ENCODE measurements at regions of chr10 and their contacts with region 1.

Region 1: GRCh38 chr10:119686439-119687191 is 35.4 kb downstream of the BAG3 start:
- DNase-seq: peak; percentile 77
- ATAC-seq: peak; percentile 29
- H3K4me3 Mint-ChIP-seq: peak overlapping the region; percentile 82
- H3K27ac Mint-ChIP-seq: peak overlapping the region; percentile 100
- H3K4me1 Mint-ChIP-seq: peaks cover 28% of the 10 kb centered on the region
- H3K27me3 Mint-ChIP-seq: no peaks in the 10 kb centered on the region
- CTCF ChIP-seq: peak; percentile 89

Region 2: GRCh38 chr10:119608316-119609155 is 78.1 kb before region 1 on chr10:
- CTCF ChIA-PET with region 1: interaction called, 11 read pairs
- POLR2A ChIA-PET with region 1: no interaction called
- DNase-seq: peak; percentile 65
- ATAC-seq: peak; percentile 96
- H3K4me3 Mint-ChIP-seq: no peak overlapping the region
- H3K27ac Mint-ChIP-seq: no peak overlapping the region
- H3K4me1 Mint-ChIP-seq: no peaks in the 10 kb centered on the region; the same call in 1 of the 2 replicates
- H3K27me3 Mint-ChIP-seq: peaks cover 4% of the 10 kb centered on the region; the same call in 1 of the 2 replicates
- CTCF ChIP-seq: no peak

Region 3: DNA sequence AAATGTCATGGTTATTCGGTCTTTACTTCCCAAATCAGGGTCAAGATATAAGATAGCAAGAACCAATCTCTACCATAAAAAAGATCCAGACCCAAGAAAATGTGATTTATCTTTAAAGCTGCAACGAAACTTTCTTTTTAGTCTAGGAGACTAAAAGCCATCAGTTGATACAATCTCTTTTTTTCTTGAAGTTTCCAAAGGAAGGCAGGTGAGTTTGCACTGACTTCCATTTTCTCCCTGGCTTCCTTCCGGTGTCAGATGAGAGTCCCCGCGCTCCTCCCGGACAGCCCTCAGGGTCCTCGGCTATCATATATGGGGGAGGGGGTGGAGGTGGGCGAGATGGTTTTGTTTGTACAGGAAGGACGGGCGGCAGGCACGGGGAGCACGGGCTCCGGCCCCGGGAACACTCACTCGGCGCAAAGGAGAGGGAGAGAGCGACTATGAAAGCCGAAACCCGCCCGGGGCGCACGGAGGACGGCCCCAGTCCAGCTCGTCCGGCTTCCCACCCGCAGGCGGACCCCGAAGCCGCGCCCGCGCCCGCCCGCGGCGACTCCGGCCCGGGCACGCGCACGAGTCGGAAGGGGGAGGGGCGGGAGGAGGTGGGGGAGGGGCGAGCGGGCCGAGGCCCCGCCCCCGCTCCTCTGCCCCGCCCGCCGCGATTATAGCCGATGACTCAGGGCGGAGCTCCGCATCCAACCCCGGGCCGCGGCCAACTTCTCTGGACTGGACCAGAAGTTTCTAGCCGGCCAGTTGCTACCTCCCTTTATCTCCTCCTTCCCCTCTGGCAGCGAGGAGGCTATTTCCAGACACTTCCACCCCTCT is 35.7 kb before region 1 on chr10 and contains the start of gene BAG3:
- CTCF ChIA-PET with region 1: interaction called, 8 read pairs
- POLR2A ChIA-PET with region 1: interaction called, 27 read pairs
- DNase-seq: peak; percentile 87
- ATAC-seq: peak; percentile 89
- H3K4me3 Mint-ChIP-seq: peak within 1 kb of the TSS; percentile 88
- H3K27ac Mint-ChIP-seq: peak within 1 kb of the TSS; percentile 31
- H3K4me1 Mint-ChIP-seq: peaks cover 40% of the 10 kb centered on the region
- H3K27me3 Mint-ChIP-seq: no peaks in the 10 kb centered on the region; the same call in 1 of the 2 replicates
- CTCF ChIP-seq: no peak
- total RNA-seq, gene BAG3: 15.7 to 16.8 TPM (median 15.9 TPM) in 3 replicates

Region 4: GRCh38 chr10:119667562-119668328 is 18.9 kb before region 1 on chr10:
- CTCF ChIA-PET with region 1: interaction called, 10 read pairs
- POLR2A ChIA-PET with region 1: interaction called, 3 read pairs
- DNase-seq: no peak
- ATAC-seq: peak; percentile 36
- H3K4me3 Mint-ChIP-seq: no peak overlapping the region
- H3K27ac Mint-ChIP-seq: peak overlapping the region; percentile 48; the same call in 1 of the 2 replicates
- H3K4me1 Mint-ChIP-seq: peaks cover 41% of the 10 kb centered on the region
- H3K27me3 Mint-ChIP-seq: no peaks in the 10 kb centered on the region
- CTCF ChIP-seq: no peak

Region 5: DNA sequence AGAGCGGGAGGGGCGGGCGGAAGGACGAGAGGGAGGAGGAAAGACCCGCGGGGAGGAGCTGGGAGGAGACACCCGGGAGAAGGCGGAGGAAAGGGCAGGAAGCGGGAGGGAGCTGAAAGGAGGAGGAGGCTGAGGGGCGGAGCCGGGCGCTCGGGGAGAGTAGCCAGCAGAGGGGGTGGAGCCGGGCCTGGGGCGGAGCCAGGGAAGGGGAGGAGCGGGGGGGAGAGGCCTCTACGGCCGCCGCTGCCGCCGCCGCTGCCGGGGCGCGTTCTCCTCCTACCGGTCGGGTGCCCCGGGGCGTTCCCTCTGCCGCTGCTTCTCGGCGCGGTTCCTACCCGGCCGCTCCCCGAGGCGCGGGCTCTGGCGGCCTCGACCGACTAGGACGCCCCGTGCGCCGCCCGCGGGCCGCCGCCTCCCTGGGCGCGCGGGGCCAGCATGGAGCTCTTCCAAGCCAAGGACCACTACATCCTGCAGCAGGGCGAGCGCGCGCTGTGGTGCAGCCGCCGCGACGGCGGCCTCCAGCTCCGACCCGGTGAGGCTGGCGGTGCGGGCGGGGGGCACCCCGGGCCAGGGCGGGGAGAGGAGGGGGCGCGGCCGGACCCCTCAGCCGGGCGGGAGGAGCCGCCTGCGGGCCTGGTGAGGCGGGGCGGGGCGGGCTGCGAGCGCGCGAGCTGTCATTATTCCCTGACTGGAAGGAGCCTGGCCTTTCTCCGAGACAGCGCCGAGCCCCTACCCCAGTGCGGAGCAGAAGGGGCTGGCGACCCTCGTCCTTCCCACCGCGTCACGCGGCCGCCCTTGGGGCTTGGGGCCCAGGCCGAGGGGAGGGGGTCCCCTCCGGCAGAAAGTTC is 39.4 kb after region 1 on chr10 and contains the start of gene INPP5F:
- CTCF ChIA-PET with region 1: interaction called, 59 read pairs
- POLR2A ChIA-PET with region 1: interaction called, 49 read pairs
- DNase-seq: peak; percentile 99
- ATAC-seq: peak; percentile 96
- H3K4me3 Mint-ChIP-seq: peak within 1 kb of the TSS; percentile 82
- H3K27ac Mint-ChIP-seq: peak within 1 kb of the TSS; percentile 75
- H3K4me1 Mint-ChIP-seq: peaks cover 30% of the 10 kb centered on the region
- H3K27me3 Mint-ChIP-seq: no peaks in the 10 kb centered on the region
- CTCF ChIP-seq: no peak
- total RNA-seq, gene INPP5F: 79.3 to 83.3 TPM (median 80.6 TPM) in 3 replicates

Region 6: GRCh38 chr10:119750391-119751230 is 64.0 kb after region 1 on chr10:
- CTCF ChIA-PET with region 1: interaction called, 75 read pairs
- POLR2A ChIA-PET with region 1: interaction called, 11 read pairs
- DNase-seq: peak; percentile 71
- ATAC-seq: peak; percentile 96
- H3K4me3 Mint-ChIP-seq: no peak overlapping the region
- H3K27ac Mint-ChIP-seq: no peak overlapping the region
- H3K4me1 Mint-ChIP-seq: peaks cover 20% of the 10 kb centered on the region
- H3K27me3 Mint-ChIP-seq: no peaks in the 10 kb centered on the region
- CTCF ChIP-seq: peak; percentile 62

Region 7: DNA sequence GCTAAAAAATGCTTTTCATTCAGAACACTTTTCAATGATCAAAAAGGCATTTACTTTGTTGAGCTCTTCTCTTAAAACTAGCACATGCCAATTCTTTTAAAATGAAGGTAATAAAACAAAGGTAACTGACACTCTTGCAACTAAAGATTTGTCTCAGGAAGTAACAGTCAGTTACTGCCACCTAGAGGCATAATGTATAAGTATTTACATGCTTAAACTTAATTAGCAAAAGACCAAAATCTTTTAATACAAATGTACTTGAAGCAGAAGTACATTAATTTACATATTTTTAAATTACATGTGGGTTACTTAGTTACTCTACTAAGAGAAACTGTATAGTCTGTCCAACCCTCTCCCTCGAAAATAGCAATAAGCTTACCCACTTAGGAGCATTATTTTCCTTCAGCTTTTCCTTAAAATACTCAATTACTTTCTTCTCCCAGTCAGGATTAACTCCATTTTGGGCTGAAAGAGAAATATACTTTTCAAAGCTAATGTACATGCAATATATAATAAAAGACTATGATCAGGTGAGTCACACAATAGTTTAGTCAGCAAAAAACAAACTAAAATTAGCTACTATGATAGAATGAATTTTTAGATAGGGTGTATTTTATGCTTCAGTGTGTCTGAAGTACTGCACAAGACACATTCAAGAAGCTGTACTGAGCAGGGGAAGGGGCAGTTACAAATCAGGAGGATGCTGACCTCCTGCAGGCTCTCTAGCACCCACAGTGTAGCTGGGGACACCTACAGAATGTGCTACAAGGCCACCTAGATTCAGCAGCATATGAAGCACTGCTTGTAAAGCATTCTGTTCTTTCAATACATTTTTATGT is 173.0 kb after region 1 on chr10:
- CTCF ChIA-PET with region 1: interaction called, 23 read pairs
- POLR2A ChIA-PET with region 1: interaction called, 4 read pairs
- DNase-seq: no peak
- ATAC-seq: no peak
- H3K4me3 Mint-ChIP-seq: no peak overlapping the region
- H3K27ac Mint-ChIP-seq: peak overlapping the region; percentile 61
- H3K4me1 Mint-ChIP-seq: peaks cover 27% of the 10 kb centered on the region
- H3K27me3 Mint-ChIP-seq: no peaks in the 10 kb centered on the region
- CTCF ChIP-seq: 0 out of 2 replicates have a peak, but pooled peaks have one; percentile 34